Activated naive CD8-positive, alpha-beta T cell treated with anti-CD3 and anti-CD28 coated beads, Interleukin-2, amount 10 ng/mL, durations not matched to agents 7 days and 5 days (primary cell): ENCODE measurements at regions of chr17 and their contacts with region 1.

Region 1: DNA sequence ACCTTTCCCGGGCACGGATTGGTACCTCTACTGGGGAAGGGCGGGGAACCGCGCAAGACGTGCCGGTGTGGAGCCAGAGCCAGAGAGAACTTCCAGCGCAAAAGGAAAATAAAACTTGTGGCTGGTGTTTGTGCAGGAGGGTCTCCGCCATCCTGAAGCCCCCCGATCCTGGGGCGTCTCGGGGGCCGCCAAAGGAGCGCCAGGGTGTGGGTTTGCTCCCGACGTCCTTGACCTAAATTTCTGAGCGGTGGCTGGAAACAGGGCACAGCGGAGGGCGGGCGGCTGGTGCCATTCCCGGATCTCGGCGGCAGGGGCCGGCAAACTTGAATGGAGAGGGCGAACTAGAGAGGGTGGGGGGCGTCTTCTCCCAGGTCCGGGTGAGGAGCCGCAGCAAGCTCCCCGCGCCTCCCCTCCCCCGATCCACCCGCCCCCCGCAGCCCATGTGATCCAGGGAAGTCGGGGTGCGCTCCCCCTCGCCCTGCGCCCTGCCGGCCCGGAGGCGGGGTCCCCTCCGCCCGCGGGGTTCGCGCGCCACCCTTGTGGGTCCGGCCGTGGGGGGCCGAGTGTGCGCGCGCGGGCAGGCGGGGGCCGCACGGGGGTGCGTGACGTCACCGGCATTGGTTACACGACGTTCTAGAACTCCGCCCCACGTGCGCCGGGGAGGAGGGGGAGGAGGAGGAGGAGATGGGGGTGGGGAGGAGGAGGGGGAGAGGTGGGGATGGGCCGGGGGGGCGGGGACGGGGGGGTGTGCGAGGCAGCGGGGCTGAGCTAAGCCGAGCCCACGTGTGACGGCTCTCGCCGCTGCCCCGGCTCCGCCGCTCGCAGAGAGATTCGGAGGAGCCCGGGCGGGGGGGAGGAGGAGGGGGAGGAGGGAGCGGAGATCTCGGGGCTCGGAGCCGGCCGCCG is at the start of gene MSI2:
- DNase-seq: peak; percentile 92
- ATAC-seq: peak; percentile 85
- H3K4me3 Mint-ChIP-seq: peak within 1 kb of the TSS; percentile 96
- H3K27ac Mint-ChIP-seq: peak within 1 kb of the TSS; percentile 95
- H3K4me1 Mint-ChIP-seq: peaks cover 46% of the 10 kb centered on the region
- H3K27me3 Mint-ChIP-seq: peaks cover 2% of the 10 kb centered on the region
- total RNA-seq, gene MSI2: 113 to 114 TPM

Region 2: GRCh38 chr17:57284984-57285646 is 29.1 kb after region 1 on chr17:
- POLR2A ChIA-PET with region 1: interaction called, 25 read pairs
- DNase-seq: peak; percentile 61
- ATAC-seq: peak; percentile 74
- H3K4me3 Mint-ChIP-seq: peak overlapping the region; percentile 81
- H3K27ac Mint-ChIP-seq: peak overlapping the region; percentile 92
- H3K4me1 Mint-ChIP-seq: peaks cover 77% of the 10 kb centered on the region
- H3K27me3 Mint-ChIP-seq: no peaks in the 10 kb centered on the region

Region 3: DNA sequence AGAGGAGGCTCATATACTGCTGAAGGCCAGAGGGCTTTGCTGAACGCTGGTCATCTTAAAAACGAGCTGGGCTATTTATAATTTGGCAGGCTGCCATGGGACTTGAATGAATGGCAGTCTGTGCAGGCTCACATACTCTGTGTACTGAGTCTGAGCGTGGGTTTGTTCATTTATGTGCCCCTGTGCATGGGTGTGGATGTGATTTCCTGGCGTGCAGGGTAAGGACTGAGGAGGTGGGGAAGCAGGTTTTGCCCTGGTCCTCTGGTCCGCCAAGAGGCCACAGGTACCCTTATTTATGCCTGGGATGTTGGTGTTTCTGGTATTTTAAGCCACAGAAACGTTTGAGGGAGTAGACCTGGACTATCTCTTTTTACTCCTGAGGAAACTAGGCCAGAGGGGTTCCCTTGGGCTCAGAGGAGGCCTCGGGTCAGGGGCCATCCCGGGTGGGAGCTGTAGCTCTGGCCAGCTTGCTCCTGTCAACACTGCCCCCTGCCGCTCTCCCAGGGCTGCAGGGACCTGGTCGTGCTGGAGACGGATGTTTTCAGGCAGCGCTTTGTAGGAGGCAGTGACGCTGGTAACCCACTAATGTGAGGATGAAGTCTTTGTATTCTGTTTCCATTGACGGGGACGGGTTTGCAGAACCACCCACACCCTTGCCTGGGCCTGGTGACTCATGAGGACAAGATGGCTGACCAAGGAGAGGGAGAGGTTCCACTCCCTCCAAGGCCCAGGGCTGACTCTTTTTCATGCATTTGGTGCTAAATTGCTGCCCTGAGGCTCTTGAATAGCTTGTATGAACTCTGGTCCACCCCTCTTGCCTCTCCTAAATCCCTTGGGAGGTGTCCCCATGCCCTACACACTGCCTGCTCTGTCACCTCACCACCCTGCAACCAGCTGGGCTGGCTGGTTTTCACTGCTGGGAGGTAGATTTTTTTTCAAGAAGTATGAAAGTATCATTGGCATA is 184.8 kb after region 1 on chr17:
- POLR2A ChIA-PET with region 1: interaction called, 20 read pairs
- DNase-seq: peak; percentile 69
- ATAC-seq: peak; percentile 82
- H3K4me3 Mint-ChIP-seq: peak overlapping the region; percentile 68
- H3K27ac Mint-ChIP-seq: peak overlapping the region; percentile 96
- H3K4me1 Mint-ChIP-seq: peaks cover 53% of the 10 kb centered on the region
- H3K27me3 Mint-ChIP-seq: no peaks in the 10 kb centered on the region

Region 4: GRCh38 chr17:57597531-57598453 is 341.8 kb after region 1 on chr17:
- POLR2A ChIA-PET with region 1: interaction called, 16 read pairs
- DNase-seq: no peak
- ATAC-seq: no peak
- H3K4me3 Mint-ChIP-seq: no peak overlapping the region
- H3K27ac Mint-ChIP-seq: peak overlapping the region; percentile 100
- H3K4me1 Mint-ChIP-seq: peaks cover 56% of the 10 kb centered on the region
- H3K27me3 Mint-ChIP-seq: no peaks in the 10 kb centered on the region